Calu3 (cell line): ENCODE measurements at regions of chr1 and their contacts with region 1.

Region 1: GRCh38 chr1:55211863-55212262 is 3.3 kb downstream of the USP24 start:
- DNase-seq: no peak
- H3K4me3 Mint-ChIP-seq: peak overlapping the region; percentile 97
- H3K27ac Mint-ChIP-seq: peak overlapping the region; percentile 20
- H3K4me1 Mint-ChIP-seq: peaks cover 58% of the 10 kb centered on the region
- H3K27me3 Mint-ChIP-seq: no peaks in the 10 kb centered on the region
- CTCF ChIP-seq: no peak

Region 2: DNA sequence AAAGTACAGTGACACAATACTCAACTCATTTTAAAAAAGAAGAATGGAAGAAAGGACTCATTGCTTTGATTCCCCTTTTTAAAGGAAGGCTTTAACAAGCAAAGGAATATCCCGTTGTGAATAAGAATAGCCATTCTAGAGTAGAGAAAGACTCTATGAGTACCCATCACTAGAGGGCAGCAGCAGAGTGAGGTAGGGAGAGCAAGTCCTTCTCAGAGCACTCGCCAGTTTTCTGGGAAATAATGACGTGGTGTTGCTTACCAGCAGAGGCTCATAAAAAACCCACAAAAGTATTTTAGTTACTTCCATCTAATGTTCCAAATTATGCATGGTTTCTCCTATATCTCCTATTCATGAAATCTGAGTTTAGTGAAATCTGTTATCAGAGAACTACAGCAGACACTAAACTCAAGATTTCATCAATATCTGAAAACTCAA is 71.3 kb before region 1 on chr1:
- CTCF ChIA-PET with region 1: no interaction called
- intact Hi-C with region 1: loop called (anchors 2 kb)
- DNase-seq: peak; percentile 75
- H3K4me3 Mint-ChIP-seq: no peak overlapping the region
- H3K27ac Mint-ChIP-seq: no peak overlapping the region
- H3K4me1 Mint-ChIP-seq: no peaks in the 10 kb centered on the region
- H3K27me3 Mint-ChIP-seq: no peaks in the 10 kb centered on the region
- CTCF ChIP-seq: peak; percentile 55

Region 3: GRCh38 chr1:55155514-55155913 is 56.3 kb before region 1 on chr1:
- CTCF ChIA-PET with region 1: no interaction called
- intact Hi-C with region 1: no loop called
- DNase-seq: no peak
- H3K4me3 Mint-ChIP-seq: no peak overlapping the region
- H3K27ac Mint-ChIP-seq: no peak overlapping the region
- H3K4me1 Mint-ChIP-seq: no peaks in the 10 kb centered on the region
- H3K27me3 Mint-ChIP-seq: no peaks in the 10 kb centered on the region
- CTCF ChIP-seq: no peak

Region 4: GRCh38 chr1:55190109-55190508 is 21.8 kb before region 1 on chr1:
- CTCF ChIA-PET with region 1: no interaction called
- intact Hi-C with region 1: loop called (anchors 2 kb)
- DNase-seq: no peak
- H3K4me3 Mint-ChIP-seq: no peak overlapping the region
- H3K27ac Mint-ChIP-seq: no peak overlapping the region
- H3K4me1 Mint-ChIP-seq: peaks cover 10% of the 10 kb centered on the region
- H3K27me3 Mint-ChIP-seq: no peaks in the 10 kb centered on the region
- CTCF ChIP-seq: no peak

Region 5: GRCh38 chr1:55277377-55278130 is 65.7 kb after region 1 on chr1:
- CTCF ChIA-PET with region 1: no interaction called
- intact Hi-C with region 1: loop called (anchors 2 kb)
- DNase-seq: peak; percentile 81
- H3K4me3 Mint-ChIP-seq: no peak overlapping the region
- H3K27ac Mint-ChIP-seq: no peak overlapping the region
- H3K4me1 Mint-ChIP-seq: peaks cover 18% of the 10 kb centered on the region
- H3K27me3 Mint-ChIP-seq: no peaks in the 10 kb centered on the region
- CTCF ChIP-seq: peak; percentile 80

Region 6: DNA sequence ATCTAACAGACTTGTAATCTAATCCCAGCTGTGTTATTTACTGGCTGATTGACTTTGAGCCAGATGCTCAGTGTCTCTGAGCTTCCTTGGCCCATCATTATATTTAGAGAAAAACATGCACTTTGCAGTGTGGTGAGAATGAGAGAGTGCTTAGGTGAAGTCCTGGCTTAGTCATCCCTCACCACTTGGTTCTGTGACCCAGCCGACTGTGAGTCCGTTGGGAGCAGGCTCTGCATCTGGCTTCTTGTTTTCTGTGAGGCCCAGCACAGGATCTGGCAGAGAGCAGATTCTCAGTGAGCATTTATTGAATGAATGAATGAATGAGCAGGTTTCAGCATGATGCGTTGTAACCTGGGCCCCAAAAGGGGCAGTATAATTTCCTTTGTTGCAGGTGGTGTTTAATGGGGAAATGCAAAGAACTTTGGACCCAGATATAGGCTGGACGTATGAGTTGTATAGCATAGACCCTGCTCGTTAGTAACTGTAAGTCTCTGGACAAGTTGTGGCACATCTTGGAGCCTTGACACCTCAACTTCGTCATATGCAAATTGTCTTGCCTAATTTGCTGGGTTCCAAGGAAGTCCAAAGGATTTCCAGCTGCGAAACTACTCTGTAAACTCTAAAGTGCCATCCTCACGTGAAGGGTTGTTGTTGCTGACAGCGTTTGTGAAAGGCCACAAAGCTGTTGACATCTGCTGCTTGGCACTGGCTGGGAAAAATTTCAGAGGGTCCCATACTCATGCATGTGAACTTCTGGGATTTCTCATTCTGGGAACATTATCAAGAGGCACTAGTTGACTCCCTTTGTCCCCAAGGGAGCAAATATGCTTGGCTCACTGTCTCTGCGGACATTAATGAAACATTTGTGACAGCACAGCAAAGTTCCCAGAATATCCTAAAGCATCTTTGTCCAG is 142.1 kb after region 1 on chr1:
- CTCF ChIA-PET with region 1: no interaction called
- intact Hi-C with region 1: no loop called
- DNase-seq: no peak
- H3K4me3 Mint-ChIP-seq: no peak overlapping the region
- H3K27ac Mint-ChIP-seq: no peak overlapping the region
- H3K4me1 Mint-ChIP-seq: no peaks in the 10 kb centered on the region
- H3K27me3 Mint-ChIP-seq: peaks cover 42% of the 10 kb centered on the region
- CTCF ChIP-seq: no peak